CD14-positive monocyte (primary cell): ENCODE measurements at regions of chr16 and their contacts with region 1.

Region 1: GRCh38 chr16:22297114-22297878 is at the start of gene POLR3E:
- DNase-seq: peak; percentile 97 to 99 (median 98)
- H3K4me3 ChIP-seq: peak within 1 kb of the TSS; percentile 74 to 95 (median 94)
- H3K4me3 Mint-ChIP-seq: peak within 1 kb of the TSS; percentile 85 to 92
- H3K27ac ChIP-seq: peak within 1 kb of the TSS; percentile 85 to 89
- H3K27ac Mint-ChIP-seq: peak within 1 kb of the TSS; percentile 86 to 96 (median 92)
- H3K4me1 ChIP-seq: peaks cover 20 to 25% of the 10 kb centered on the region in 2 donors
- H3K4me1 Mint-ChIP-seq: peaks cover 28% of the 10 kb centered on the region
- H3K27me3 ChIP-seq: no peaks in the 10 kb centered on the region
- H3K27me3 Mint-ChIP-seq: peaks cover 0 to 4% (median 2%) of the 10 kb centered on the region in 3 donors
- CTCF ChIP-seq: peak; percentile 88
- polyA plus RNA-seq, gene POLR3E: 4.1 to 34.6 (median 5.7) TPM

Region 2: DNA sequence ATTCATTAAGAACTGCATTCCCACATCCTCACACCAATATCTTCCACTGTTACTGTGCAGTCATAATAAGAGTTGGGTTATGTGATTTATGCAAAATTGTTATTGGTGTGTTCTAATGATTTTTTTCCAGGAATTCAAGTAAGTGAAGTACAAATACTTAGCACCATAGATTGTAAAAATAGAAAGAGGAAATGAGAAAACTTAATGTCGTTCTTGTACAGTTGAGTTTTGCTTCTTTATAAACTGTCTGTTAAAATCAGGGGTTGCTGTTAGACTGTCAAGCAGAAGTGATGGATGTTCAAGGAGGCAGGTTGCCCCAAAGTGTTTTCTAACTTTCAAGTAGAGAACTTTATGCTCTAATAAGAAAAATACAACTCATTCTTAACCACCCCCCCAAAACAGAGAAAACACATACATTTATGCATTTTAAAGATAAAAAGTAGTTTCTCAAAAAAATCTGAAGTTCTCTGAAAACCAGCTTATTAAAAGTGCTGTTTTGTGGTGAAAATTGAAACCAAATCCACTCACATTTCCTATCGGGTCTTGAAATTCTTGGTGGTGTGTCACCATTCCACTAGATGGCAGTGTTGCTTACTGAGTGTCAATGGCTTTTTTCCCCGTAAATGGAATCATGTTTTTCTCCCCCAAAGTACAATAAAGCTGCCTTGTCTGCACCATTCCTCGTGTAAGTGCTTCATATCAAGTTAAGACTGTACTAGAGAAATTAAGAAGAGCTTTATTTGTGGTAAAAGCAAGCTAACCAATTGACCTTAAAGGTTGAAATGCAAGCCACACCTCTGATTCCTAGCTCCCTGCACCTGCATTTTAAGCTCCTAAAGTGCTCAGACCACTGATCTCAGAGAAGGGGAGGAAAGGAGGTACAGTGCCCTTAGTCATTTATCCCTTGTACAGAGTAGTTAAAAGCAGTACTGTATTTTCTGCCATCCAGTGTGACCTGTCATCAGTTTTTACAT is 640.2 kb before region 1 on chr16:
- intact Hi-C with region 1: loop called (anchors 10 kb)
- DNase-seq: peak; percentile 50 to 69 (median 64)
- H3K4me3 ChIP-seq: peak overlapping the region in 2 of 3 experiments; percentile 22 to 55
- H3K4me3 Mint-ChIP-seq: peak overlapping the region; percentile 47 to 69
- H3K27ac ChIP-seq: peak overlapping the region; percentile 36 to 77
- H3K27ac Mint-ChIP-seq: peak overlapping the region; percentile 87 to 97 (median 94)
- H3K4me1 ChIP-seq: peaks cover 71 to 75% of the 10 kb centered on the region in 2 donors
- H3K4me1 Mint-ChIP-seq: peaks cover 78% of the 10 kb centered on the region
- H3K27me3 ChIP-seq: no peaks in the 10 kb centered on the region
- H3K27me3 Mint-ChIP-seq: peaks cover 0 to 5% (median under 1%) of the 10 kb centered on the region in 3 donors
- CTCF ChIP-seq: peak; percentile 94

Region 3: GRCh38 chr16:22001591-22001990 is 295.7 kb before region 1 on chr16:
- intact Hi-C with region 1: loop called (anchors 5 kb)
- DNase-seq: no peak
- H3K4me3 ChIP-seq: no peak overlapping the region
- H3K4me3 Mint-ChIP-seq: no peak overlapping the region
- H3K27ac ChIP-seq: no peak overlapping the region
- H3K27ac Mint-ChIP-seq: no peak overlapping the region
- H3K4me1 ChIP-seq: peaks cover 5 to 8% of the 10 kb centered on the region in 2 donors
- H3K4me1 Mint-ChIP-seq: peaks cover 14% of the 10 kb centered on the region
- H3K27me3 ChIP-seq: peaks cover 0 to 3% of the 10 kb centered on the region in 2 donors
- H3K27me3 Mint-ChIP-seq: peaks cover 0 to 17% (median 4%) of the 10 kb centered on the region in 3 donors
- CTCF ChIP-seq: no peak

Region 4: DNA sequence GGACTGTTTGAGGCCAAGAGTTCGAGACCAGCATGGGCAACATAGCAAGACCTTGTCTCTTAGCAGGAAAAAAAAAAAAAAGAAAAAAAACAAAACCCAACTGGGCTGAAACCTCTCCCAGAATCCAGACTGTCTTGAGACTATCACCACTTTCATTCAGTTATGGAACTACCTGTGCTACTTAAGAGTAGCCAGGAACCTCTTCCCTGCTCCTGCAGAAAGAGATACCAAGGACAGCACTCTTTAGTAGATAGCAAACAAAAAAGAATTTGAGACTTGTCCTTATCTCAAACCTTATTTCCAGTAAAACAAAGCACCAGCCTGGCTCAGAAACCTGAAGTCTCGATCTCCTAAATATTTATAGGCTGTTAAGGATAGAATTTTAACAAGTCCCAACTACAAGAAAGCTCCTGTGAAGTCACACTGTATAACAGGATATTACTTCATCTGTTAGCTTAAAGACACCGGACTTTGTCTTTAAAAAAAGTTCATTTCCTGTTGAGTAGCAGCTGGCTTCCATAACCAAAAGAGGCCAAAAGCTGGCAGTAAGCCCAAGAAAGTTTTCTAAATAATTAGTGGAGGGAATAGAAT is 72.0 kb after region 1 on chr16:
- intact Hi-C with region 1: no loop called
- DNase-seq: peak; percentile 15 to 40 (median 19)
- H3K4me3 ChIP-seq: no peak overlapping the region
- H3K4me3 Mint-ChIP-seq: no peak overlapping the region
- H3K27ac ChIP-seq: peak overlapping the region in 1 of 2 donors; percentile 39
- H3K27ac Mint-ChIP-seq: peak overlapping the region in 5 of 7 donors; percentile 33 to 89 (median 79)
- H3K4me1 ChIP-seq: peaks cover 30 to 50% of the 10 kb centered on the region in 2 donors
- H3K4me1 Mint-ChIP-seq: peaks cover 47% of the 10 kb centered on the region
- H3K27me3 ChIP-seq: no peaks in the 10 kb centered on the region
- H3K27me3 Mint-ChIP-seq: peaks cover 0 to 4% (median 3%) of the 10 kb centered on the region in 3 donors
- CTCF ChIP-seq: no peak